ENCODE measurements at regions of chr7 and their contacts with region 1.

Region 1: GRCh38 chr7:151123822-151124464 is 37.7 kb downstream of the AGAP3 start:
- DNase-seq: peak; percentile 93
- H3K4me3 ChIP-seq: no peak overlapping the region
- H3K27ac ChIP-seq: no peak overlapping the region
- H3K4me1 ChIP-seq: peaks cover 0 to 10% (median 3%) of the 10 kb centered on the region in 6 donors
- H3K27me3 ChIP-seq: no peaks in the 10 kb centered on the region
- CTCF ChIP-seq: peak; percentile 82 to 99 (median 95)
- POLR2A ChIP-seq: no peak

Region 2: DNA sequence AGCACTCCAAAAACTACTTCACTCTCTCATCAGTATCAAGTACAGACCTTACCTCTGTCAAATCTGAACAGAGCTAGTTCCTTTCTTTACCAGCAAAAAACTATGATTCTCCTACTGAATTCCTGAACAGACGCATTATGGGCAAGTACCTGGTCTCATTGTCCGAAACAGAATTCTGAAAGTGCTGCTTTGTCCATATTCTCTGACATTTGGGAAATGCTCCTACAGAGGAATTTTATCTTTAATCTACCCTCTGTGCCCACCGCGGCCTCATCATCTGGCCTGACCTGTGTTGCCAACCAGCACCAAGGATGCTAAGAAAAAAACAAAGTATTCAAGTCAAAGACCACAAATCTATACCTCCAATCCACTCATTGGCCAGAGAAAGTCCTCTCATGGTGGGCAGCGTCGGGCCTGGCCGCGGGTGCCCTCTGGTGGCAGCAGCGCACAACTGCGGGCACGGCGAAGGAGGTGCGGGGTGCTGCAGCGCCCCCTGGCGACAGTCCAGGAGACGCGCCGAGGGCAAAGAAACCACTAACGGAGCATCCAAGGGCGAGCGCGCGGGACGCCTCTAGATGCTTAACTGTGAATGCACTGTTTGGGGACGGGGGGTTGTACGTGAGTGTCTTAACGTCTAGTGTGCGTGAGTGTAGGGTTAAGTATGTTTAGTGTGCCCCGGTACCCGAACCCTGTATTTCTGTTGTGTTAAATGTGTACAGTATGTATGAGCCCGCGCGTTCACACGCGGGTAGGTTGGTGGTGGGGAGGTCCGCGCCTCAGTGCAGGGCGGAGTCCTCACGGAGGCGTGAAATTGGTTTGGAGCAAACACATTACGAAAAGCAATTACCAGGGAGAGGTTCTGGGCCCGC is 48.6 kb after region 1 on chr7:
- intact Hi-C with region 1: loop called (anchors 5 kb)
- DNase-seq: peak; percentile 96
- H3K4me3 ChIP-seq: no peak overlapping the region
- H3K27ac ChIP-seq: no peak overlapping the region
- H3K4me1 ChIP-seq: peaks cover 0 to 19% (median 9%) of the 10 kb centered on the region in 6 donors
- H3K27me3 ChIP-seq: peaks cover 0 to 95% (median 32%) of the 10 kb centered on the region in 7 donors
- CTCF ChIP-seq: peak; percentile 98 to 100 (median 100)
- POLR2A ChIP-seq: peak in 1 of 3 donors; percentile 17

Region 3: DNA sequence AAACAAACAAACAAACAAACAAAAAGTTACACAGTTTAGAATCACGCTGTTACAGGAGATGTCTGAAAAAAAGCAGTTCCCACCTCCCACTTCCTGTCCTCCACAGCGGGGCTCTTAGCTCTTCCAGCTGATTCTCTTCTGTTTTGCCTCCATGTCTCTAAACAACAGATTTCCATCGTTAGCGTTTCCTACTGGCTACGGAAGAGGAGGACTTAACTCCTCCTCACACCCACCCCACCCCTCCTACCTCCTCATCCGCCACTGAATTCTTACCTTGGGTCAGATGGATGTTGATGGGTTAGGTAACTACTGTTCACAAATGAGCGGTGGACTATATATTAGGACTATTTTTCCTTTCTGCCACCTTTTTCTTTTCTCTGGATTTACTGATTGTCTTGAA is 180.9 kb after region 1 on chr7:
- intact Hi-C with region 1: loop called (anchors 10 kb)
- DNase-seq: no peak
- H3K4me3 ChIP-seq: no peak overlapping the region
- H3K27ac ChIP-seq: no peak overlapping the region
- H3K4me1 ChIP-seq: peaks cover 7 to 30% (median 12%) of the 10 kb centered on the region in 6 donors
- H3K27me3 ChIP-seq: peaks cover 5 to 68% (median 23%) of the 10 kb centered on the region in 7 donors
- CTCF ChIP-seq: no peak
- POLR2A ChIP-seq: no peak